Mammary epithelial cell (primary cell): ENCODE measurements at regions of chr9 and their contacts with region 1.

Region 1: GRCh38 chr9:86434039-86434726 is 80.0 kb upstream of the TUT7 start:
- DNase-seq: peak; percentile 35
- H3K4me3 ChIP-seq: no peak overlapping the region
- H3K27ac ChIP-seq: no peak overlapping the region
- H3K4me1 ChIP-seq: peaks cover 8% of the 10 kb centered on the region
- H3K27me3 ChIP-seq: no peaks in the 10 kb centered on the region
- CTCF ChIP-seq: peak; percentile 82 to 84

Region 2: GRCh38 chr9:86454661-86455615 is 20.8 kb after region 1 on chr9:
- CTCF ChIA-PET with region 1: no interaction called
- dilution Hi-C with region 1: no loop called
- in situ Hi-C with region 1: no loop called
- intact Hi-C with region 1: no loop called
- DNase-seq: peak; percentile 9
- H3K4me3 ChIP-seq: peak overlapping the region in 1 of 3 experiments; percentile 2
- H3K27ac ChIP-seq: peak overlapping the region; percentile 5
- H3K4me1 ChIP-seq: peaks cover 20% of the 10 kb centered on the region
- H3K27me3 ChIP-seq: no peaks in the 10 kb centered on the region
- CTCF ChIP-seq: no peak

Region 3: DNA sequence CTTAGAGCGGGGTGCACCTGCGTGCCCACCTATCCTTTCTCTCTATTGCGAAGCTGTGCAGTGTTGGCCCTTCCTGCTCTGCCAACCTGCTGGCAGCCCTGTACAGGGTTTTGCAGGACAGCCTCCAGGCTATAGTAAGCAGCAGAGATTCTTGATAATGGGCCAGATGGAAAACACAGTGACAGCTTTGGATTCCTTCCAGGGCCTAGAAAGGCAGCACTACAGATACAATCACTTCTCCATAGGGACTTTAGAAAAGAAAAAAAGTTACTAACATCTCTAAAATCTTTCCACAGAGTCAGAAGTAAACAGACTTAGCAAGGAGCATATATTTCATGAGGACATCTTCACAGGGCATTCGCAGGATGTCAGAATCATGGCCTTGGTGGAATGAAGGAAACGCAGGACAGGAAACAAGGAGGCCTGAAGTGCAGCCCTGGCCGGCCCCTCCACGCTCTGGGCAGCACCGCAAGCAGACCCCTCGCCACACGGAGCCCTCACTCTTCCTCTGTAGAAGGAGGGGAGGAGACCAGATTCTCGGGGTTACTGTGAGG is 685.2 kb after region 1 on chr9:
- CTCF ChIA-PET with region 1: no interaction called
- dilution Hi-C with region 1: no loop called
- in situ Hi-C with region 1: loop called in 1 of 2 experiments (anchors 25 kb)
- intact Hi-C with region 1: no loop called
- DNase-seq: peak; percentile 61
- H3K4me3 ChIP-seq: no peak overlapping the region
- H3K27ac ChIP-seq: no peak overlapping the region
- H3K4me1 ChIP-seq: peaks cover 26% of the 10 kb centered on the region
- H3K27me3 ChIP-seq: no peaks in the 10 kb centered on the region
- CTCF ChIP-seq: no peak